ENCODE measurements at regions of chr19 and their contacts with region 1.

Region 1: GRCh38 chr19:49640113-49640898 is at the start of gene RRAS:
- DNase-seq: peak; percentile 100
- H3K4me3 Mint-ChIP-seq: peak within 1 kb of the TSS; percentile 97
- H3K27ac Mint-ChIP-seq: peak within 1 kb of the TSS; percentile 100
- H3K4me1 Mint-ChIP-seq: peaks cover 52% of the 10 kb centered on the region
- H3K27me3 Mint-ChIP-seq: no peaks in the 10 kb centered on the region
- total RNA-seq, gene RRAS: 4.1 and 5.0 TPM in 2 replicates

Region 2: DNA sequence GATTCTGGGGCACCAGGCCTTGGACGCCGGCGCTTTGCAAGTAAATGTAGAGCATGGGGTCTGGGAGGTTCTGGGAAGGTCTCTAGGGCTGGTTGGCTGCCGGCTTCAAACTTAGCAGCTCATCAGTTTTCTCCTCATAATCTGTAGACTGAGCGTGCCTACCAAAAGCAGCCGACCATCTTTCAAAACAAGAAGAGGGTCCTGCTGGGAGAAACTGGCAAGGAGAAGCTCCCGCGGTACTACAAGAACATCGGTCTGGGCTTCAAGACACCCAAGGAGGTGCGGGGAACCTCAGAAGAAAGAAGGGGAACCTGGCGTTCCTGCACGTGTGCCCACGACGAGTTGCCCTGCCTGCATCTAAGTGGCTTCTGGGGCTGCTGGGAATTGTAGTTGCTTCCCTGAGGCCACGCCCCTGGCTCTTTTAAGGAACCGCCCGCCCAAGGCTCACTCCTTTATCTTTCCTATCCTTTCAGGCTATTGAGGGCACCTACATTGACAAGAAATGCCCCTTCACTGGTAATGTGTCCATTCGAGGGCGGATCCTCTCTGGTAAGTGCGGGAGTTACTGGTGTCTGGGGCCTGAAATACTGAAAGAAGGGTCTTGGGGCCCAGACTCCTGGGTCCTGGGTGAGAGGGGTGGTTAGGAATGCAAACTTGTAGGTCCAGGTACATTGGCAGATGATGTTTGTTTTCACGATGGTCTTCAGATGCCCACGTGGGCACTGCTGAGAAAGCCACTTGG is 143.1 kb before region 1 on chr19:
- intact Hi-C with region 1: loop called (anchors 1 kb)
- DNase-seq: peak; percentile 93
- H3K4me3 Mint-ChIP-seq: peak overlapping the region; percentile 98
- H3K27ac Mint-ChIP-seq: peak overlapping the region; percentile 99
- H3K4me1 Mint-ChIP-seq: peaks cover 57% of the 10 kb centered on the region
- H3K27me3 Mint-ChIP-seq: no peaks in the 10 kb centered on the region

Region 3: GRCh38 chr19:49570138-49570856 is 70.0 kb before region 1 on chr19:
- intact Hi-C with region 1: no loop called
- DNase-seq: peak; percentile 93
- H3K4me3 Mint-ChIP-seq: peak overlapping the region; percentile 56
- H3K27ac Mint-ChIP-seq: peak overlapping the region; percentile 77
- H3K4me1 Mint-ChIP-seq: peaks cover 50% of the 10 kb centered on the region
- H3K27me3 Mint-ChIP-seq: no peaks in the 10 kb centered on the region

Region 4: DNA sequence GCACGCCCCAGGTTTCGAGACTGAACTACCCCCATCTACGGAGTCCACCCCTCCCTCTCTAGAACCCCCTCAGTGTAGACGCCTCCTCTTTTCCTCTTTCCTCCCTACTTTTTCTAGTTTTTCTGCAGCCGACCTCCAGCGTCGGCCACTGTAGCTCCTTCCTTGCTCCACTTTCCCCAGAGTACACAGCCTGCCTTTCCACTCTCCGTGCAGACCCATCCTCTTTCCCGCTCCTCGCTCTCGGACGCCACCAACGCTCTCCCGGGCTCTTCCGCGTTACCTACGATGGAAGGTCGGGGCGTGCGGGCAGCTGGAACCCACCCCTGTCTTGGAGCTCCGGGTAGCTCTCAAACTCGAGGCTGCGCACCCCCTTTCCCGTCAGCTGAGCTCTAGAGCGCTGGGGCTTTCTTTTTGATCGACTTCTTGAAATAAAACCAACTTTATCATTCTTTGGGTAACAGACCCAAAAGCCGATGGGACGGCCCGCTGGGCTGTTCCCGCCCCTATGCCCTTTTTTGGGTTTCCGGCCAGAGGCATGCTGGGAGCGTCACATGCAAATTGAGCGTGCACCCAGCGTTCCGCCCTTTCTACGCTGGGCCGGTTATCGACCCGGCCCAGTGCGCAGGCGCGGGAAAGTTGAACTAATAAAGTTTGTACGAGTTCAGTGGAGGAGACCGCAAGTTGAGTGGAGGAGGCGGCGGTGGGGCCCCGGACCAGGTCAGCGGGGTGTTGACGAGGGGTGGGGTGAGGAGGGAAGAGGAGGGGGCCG is 25.2 kb after region 1 on chr19 and contains the starts of genes BCL2L12 and IRF3:
- intact Hi-C with region 1: loop called (anchors 1 kb)
- DNase-seq: peak; percentile 100
- H3K4me3 Mint-ChIP-seq: peak within 1 kb of the TSS; percentile 97
- H3K27ac Mint-ChIP-seq: peak within 1 kb of the TSS; percentile 95
- H3K4me1 Mint-ChIP-seq: peaks cover 39% of the 10 kb centered on the region
- H3K27me3 Mint-ChIP-seq: no peaks in the 10 kb centered on the region
- total RNA-seq, gene BCL2L12: 69.3 and 72.0 TPM in 2 replicates
- total RNA-seq, gene IRF3: 146 and 151 TPM in 2 replicates

Region 5: GRCh38 chr19:49766007-49766937 is 126.0 kb after region 1 on chr19:
- intact Hi-C with region 1: loop called (anchors 2 kb)
- DNase-seq: peak; percentile 100
- H3K4me3 Mint-ChIP-seq: peak overlapping the region; percentile 91
- H3K27ac Mint-ChIP-seq: peak overlapping the region; percentile 92
- H3K4me1 Mint-ChIP-seq: peaks cover 32% of the 10 kb centered on the region
- H3K27me3 Mint-ChIP-seq: no peaks in the 10 kb centered on the region

Measured in activated CD4-positive, alpha-beta T cell treated with anti-CD3 and anti-CD28 coated beads, Interleukin-2, amount 10 ng/mL, durations not matched to agents 24 days and 14 days (primary cell).